ENCODE measurements at regions of chr11 and their contacts with region 1.

Region 1: DNA sequence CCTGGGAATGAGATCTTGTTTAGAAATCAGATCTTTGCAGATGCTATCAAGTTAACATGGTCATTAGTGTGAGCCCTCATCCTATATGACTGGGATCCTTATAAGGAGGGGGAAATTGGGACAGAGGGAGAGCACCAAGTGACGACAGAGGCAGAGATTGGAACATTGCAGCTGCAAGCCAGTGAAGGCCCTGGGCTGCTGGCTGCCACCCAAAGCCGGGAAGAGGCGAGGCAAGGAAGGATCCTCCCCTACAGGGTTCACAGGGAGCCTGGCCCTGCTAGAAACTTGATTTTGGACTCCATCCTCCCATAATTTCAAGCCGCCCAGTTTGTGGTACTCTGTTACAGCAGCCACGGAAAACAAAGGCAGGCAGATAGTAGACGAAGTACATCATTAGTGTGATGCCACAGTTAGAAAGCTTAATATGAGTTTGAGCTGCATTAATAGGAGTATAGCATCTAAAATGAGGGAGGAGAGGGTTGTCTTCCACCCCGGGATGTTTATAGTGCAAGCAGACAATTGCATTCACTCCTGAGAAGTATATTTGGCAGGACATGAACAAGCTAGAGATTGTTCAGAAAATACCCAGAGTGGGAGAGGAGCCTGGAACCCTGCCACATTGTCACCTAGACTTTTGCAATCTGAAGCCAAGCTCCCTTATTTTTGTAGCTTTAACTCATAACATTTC is 56.8 kb upstream of the CLMP start:
- DNase-seq: peak; percentile 23 to 51
- ATAC-seq: no peak

Region 2: GRCh38 chr11:123103326-123103980 is 148.3 kb before region 1 on chr11:
- intact Hi-C with region 1: loop called in 1 of 2 experiments (anchors 10 kb)
- DNase-seq: peak; percentile 14 to 31
- ATAC-seq: peak; percentile 50

Region 3: GRCh38 chr11:123110356-123110755 is 141.4 kb before region 1 on chr11:
- intact Hi-C with region 1: loop called (anchors 2 to 10 kb)
- DNase-seq: no peak
- ATAC-seq: no peak

Measured in left colon (tissue), 2 donors.